ENCODE measurements at regions of chr7 and their contacts with region 1.

Region 1: DNA sequence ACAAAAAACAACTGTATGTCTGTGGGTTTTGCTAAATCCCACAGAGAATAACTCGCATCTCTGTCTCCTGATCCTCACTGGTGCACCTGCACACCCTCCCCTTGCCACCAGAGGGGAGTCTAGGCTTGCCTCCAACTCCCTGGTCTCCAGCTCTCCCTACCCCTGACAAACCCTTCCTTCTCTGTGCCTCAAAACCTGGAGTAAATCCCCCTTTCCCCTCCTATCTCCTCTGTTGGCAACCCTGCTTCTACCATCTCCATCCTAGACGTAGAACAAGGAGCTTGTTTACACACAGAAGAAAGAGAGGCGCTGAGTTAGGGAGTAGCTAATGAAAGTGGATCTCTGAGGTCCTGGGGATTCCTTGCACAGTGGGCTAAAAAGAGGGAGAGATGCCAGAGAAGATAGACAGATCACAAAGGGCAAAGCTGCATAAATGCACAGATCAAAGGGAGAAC is 6.0 kb downstream of the MBLAC1 start:
- DNase-seq: peak; percentile 77
- H3K4me3 Mint-ChIP-seq: no peak overlapping the region
- H3K27ac Mint-ChIP-seq: peak overlapping the region; percentile 48
- H3K4me1 Mint-ChIP-seq: peaks cover 30% of the 10 kb centered on the region
- H3K27me3 Mint-ChIP-seq: no peaks in the 10 kb centered on the region

Region 2: GRCh38 chr7:100119062-100119700 is 13.5 kb before region 1 on chr7 and contains the starts of genes CNPY4 and TAF6:
- CTCF ChIA-PET with region 1: interaction called, 36 read pairs
- POLR2A ChIA-PET with region 1: no interaction called
- DNase-seq: peak; percentile 96
- H3K4me3 Mint-ChIP-seq: peak within 1 kb of the TSS; percentile 83
- H3K27ac Mint-ChIP-seq: peak within 1 kb of the TSS; percentile 99
- H3K4me1 Mint-ChIP-seq: peaks cover 25% of the 10 kb centered on the region
- H3K27me3 Mint-ChIP-seq: no peaks in the 10 kb centered on the region
- total RNA-seq, gene CNPY4: 40.5 to 40.7 TPM
- total RNA-seq, gene TAF6: 60.1 to 65.5 TPM

Region 3: GRCh38 chr7:100148559-100149350 is 16.0 kb after region 1 on chr7 and contains the start of gene LAMTOR4:
- CTCF ChIA-PET with region 1: interaction called, 17 read pairs
- POLR2A ChIA-PET with region 1: interaction called, 4 read pairs
- DNase-seq: peak; percentile 100
- H3K4me3 Mint-ChIP-seq: peak within 1 kb of the TSS; percentile 97
- H3K27ac Mint-ChIP-seq: peak within 1 kb of the TSS; percentile 88
- H3K4me1 Mint-ChIP-seq: peaks cover 42% of the 10 kb centered on the region
- H3K27me3 Mint-ChIP-seq: no peaks in the 10 kb centered on the region
- total RNA-seq, gene LAMTOR4: 124 to 172 TPM

Region 4: DNA sequence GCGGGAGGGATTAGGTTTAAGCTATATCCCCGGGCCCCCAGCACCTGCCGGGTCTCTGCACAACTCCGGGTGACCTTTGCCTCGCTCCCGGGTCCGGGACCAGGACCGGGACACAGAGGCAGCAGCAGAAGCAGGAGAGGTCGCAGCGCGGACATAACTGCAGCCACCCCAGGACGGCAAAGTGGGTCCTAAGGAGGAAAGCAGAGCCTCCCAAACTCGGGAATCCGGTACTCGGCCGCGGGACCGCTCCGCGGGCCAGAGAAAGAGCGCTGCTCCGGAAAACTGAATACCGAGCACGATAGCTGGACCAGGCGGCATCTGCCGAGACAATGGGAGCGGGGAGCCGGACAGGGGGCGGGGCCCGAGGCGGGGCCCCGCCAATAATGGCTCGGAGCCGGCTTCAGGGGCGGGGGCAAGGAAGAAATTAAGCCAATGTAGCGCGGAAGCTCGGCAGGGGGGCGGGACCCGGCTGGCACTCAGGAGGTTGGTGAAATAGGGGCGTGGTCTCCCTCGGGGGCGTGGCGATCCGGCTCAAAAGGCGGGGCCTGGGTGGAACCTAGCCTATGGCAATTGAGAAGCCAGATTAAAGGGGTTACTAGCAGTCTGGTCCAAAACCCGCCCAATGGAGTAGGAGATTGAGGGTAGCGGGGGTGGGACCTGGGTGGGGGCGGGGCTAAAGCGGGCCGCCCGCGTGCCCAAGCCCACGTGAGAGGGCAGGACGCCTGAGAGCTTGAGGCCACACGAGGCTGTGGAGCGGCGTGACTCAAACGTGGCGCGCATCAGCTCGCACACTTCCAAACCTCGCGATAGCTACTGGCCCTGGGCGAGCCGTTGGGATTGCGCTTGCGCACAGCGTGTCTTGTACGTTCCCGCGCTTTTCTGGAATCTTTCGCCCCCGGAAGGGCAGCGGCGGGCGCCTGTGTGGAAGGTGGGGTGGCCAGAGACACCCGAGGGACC is 44.6 kb after region 1 on chr7 and contains the starts of genes GPC2 and STAG3:
- CTCF ChIA-PET with region 1: interaction called, 13 read pairs
- POLR2A ChIA-PET with region 1: no interaction called
- DNase-seq: peak; percentile 98
- H3K4me3 Mint-ChIP-seq: peak within 1 kb of the TSS; percentile 78
- H3K27ac Mint-ChIP-seq: peak within 1 kb of the TSS; percentile 75
- H3K4me1 Mint-ChIP-seq: peaks cover 69% of the 10 kb centered on the region
- H3K27me3 Mint-ChIP-seq: no peaks in the 10 kb centered on the region
- total RNA-seq, gene GPC2: 13.9 to 20.9 TPM
- total RNA-seq, gene STAG3: 24.2 to 24.7 TPM

Region 5: DNA sequence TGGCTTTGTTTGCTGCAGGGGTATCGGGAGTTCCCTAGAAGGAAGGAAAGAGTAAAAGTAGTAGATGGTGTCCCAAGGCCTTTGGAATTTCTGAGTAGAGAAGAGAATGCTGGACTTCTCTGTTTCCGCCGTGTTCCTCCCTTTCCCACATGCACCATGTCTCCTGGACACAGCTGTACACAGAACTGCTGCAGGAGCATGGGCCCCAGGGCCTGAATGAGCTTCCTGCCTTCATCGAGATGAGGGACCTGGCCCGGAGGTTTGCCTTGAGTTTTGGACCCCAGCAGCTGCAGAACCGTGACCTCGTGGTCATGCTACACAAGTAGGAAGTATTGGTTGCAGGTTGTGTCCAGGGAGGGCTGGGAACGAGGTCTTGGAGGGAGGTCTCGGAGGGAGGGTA is 71.7 kb after region 1 on chr7:
- CTCF ChIA-PET with region 1: interaction called, 12 read pairs
- POLR2A ChIA-PET with region 1: no interaction called
- DNase-seq: no peak
- H3K4me3 Mint-ChIP-seq: no peak overlapping the region
- H3K27ac Mint-ChIP-seq: peak overlapping the region; percentile 1
- H3K4me1 Mint-ChIP-seq: peaks cover 26% of the 10 kb centered on the region
- H3K27me3 Mint-ChIP-seq: no peaks in the 10 kb centered on the region

Region 6: GRCh38 chr7:100346921-100347320 is 214.2 kb after region 1 on chr7:
- CTCF ChIA-PET with region 1: interaction called, 12 read pairs
- POLR2A ChIA-PET with region 1: no interaction called
- DNase-seq: no peak
- H3K4me3 Mint-ChIP-seq: no peak overlapping the region
- H3K27ac Mint-ChIP-seq: peak overlapping the region; percentile 36
- H3K4me1 Mint-ChIP-seq: peaks cover 46% of the 10 kb centered on the region
- H3K27me3 Mint-ChIP-seq: no peaks in the 10 kb centered on the region

Measured in activated CD4-positive, alpha-beta T cell treated with anti-CD3 and anti-CD28 coated beads, Interleukin-2, amount 10 ng/mL, durations not matched to agents 7 days and 5 days (primary cell).